ENCODE measurements at regions of chr1 and their contacts with region 1.

Region 1: DNA sequence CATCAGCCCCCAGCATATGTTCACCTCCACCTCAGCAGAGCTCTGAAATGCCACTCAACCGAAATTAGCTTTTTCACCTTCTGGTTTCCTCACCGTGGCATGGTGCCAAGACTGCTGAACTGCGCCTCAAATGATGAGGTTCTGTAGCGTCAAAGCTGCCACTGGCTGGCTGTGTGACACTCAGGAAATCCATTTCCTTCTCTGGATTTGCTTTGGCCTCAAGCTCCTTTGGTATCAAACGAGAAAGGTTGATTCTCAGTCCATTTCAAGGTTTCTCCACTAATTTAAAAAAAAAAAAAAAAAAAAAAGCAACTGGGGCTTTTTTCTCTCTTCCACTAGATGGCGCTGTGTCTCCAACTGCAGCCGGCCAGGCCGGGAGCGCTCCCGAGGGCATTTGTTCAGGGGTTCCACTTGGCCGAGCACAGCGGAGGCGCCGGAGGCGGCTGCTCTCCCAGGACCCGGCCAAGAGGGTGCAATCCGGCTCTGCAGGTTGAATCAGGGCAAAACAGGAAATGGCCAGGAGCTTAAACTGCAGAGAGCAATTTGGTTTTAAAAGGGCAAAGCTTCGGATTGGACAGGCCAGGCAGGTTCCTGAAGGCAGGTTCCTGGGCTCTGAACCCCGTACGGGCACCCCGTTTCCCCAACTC is 26.5 kb upstream of the PLA2G2C start:
- DNase-seq: no peak
- H3K4me3 ChIP-seq: no peak overlapping the region
- CTCF ChIP-seq: peak; percentile 50

Region 2: GRCh38 chr1:19974822-19975416 is 237.9 kb before region 1 on chr1:
- CTCF ChIA-PET with region 1: interaction called, 10 read pairs
- POLR2A ChIA-PET with region 1: no interaction called
- DNase-seq: peak; percentile 28
- H3K4me3 ChIP-seq: no peak overlapping the region
- CTCF ChIP-seq: peak; percentile 91

Region 3: DNA sequence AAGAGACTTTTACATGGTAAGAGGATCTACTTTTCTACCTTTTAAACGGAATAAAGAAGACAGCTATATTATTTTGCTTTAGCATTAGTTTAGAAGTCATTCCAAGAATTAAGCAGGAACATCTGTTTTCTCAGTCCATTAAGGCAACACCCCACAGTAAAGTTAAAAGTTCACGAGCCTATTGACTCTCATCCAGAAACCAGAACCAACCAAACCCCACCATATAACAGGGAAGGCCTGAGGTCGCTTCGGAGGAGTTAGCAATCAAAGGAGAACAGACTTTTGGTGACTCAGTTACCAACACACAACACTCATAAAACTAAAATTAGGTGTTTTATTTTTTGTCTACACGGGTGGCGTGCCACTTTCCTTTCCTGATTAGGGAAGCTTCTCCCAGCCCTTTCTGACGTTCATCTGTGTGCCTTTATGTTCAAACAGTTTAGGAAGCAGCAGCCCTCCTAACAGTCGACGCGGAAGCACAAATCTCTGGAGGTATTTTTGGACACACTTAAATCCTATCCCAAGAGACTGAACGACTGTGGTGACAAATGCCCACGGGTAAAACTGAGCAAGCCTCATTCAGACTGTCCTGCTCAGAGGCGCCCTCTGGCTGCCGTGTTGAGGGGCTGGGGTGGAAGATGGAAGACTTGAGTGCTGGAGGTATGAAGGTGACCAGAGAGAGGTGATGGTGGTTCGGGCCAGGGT is 17.9 kb before region 1 on chr1:
- CTCF ChIA-PET with region 1: interaction called, 38 read pairs
- POLR2A ChIA-PET with region 1: no interaction called
- DNase-seq: no peak
- H3K4me3 ChIP-seq: no peak overlapping the region
- CTCF ChIP-seq: peak; percentile 85

Region 4: DNA sequence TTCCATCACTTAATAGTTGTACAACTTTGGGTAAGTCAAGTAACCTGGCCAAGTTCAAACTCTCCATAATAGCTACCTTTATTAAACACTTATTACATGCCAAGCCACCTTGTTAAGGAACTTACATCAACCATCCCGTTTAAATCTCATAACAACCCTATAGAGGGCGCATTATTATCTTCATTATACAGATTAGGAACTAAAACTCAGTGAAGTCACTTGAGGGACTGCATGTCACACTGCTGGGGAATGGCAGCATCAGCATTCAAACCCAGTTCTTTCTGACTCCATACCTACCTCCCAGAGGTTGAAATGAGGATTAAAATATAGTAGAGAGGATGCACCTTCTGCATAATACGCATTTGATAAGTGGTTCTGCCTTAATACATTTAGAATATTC is 20.6 kb after region 1 on chr1:
- CTCF ChIA-PET with region 1: interaction called, 17 read pairs
- POLR2A ChIA-PET with region 1: no interaction called
- DNase-seq: no peak
- H3K4me3 ChIP-seq: no peak overlapping the region
- CTCF ChIP-seq: peak; percentile 18

Region 5: GRCh38 chr1:20361806-20362640 is 149.2 kb after region 1 on chr1:
- CTCF ChIA-PET with region 1: interaction called, 18 read pairs
- POLR2A ChIA-PET with region 1: no interaction called
- DNase-seq: no peak
- H3K4me3 ChIP-seq: no peak overlapping the region
- CTCF ChIP-seq: peak; percentile 91

Region 6: DNA sequence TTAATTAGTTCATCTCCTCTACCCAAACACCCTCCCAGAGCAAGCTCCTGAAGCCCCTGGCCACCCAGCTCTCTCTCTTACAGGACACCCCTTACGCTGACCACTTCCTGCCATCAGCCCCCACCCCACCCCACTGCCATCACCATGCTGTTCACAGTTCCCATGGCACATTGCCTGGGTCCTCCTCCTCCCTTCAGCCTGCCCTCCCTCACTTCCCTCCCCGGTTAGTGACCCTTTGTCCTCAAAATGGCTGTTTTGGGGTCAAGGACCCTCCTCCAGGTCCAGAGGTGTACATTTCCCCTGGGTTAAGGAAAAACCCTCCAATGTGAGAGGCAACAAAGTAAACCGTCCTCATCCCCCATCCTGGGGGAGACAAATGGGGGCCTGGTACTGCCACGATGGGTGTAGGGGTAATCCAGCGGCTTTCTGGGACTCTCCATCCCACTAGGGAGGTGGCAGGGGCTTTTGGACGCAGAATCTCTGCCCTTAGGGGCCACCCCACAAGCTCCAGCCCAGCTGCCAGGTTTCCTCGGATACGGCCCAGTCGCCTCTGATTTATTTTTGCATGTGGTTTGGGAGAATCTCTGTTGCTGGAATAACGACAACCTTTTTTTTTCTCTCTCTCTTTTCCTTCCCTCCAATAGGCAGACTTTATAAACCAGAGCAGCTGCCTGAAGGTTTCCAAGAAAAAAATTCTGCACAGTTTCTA is 264.7 kb after region 1 on chr1:
- CTCF ChIA-PET with region 1: interaction called, 15 read pairs
- POLR2A ChIA-PET with region 1: no interaction called
- DNase-seq: no peak
- H3K4me3 ChIP-seq: no peak overlapping the region
- CTCF ChIP-seq: no peak

Region 7: DNA sequence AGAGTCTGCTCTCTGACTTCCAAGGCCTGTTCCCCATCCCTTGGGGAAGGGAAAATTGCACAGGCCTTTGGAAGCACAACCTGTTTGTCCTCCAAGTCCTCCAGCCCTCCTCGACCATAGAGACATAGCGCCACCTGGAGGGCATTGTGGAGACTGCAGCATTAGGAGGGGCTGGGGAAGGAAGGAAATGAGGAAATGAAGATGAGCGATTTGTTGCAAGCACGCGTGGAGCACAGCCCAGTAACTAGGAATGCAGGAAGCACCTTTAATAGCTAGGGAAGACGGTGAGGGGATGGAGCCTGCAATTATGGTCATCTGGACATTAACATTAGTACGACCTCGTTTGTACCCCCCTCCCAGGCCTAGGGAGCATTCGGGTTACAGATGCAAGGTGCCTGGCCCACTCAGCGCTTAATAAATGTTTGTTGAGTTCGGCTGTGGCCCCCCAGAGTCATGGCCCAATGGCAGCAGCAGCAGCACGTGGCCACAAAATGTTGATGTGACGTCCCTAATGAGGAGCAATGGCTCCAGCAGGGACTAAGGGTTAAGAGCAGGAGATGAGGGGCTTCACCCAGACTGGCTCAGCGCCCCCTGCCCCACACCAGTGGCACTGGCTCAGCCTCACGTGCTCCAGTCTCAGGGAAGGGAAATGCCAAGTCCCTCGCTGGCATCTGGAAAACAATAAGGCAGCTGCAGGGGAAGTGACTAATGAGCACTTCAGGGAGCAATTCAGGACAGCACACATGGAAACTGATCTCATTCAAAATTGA is 281.2 kb after region 1 on chr1:
- CTCF ChIA-PET with region 1: interaction called, 198 read pairs
- POLR2A ChIA-PET with region 1: no interaction called
- DNase-seq: peak; percentile 42
- H3K4me3 ChIP-seq: no peak overlapping the region
- CTCF ChIP-seq: peak; percentile 97

Measured in AG04449 (cell line).